Ascending aorta (tissue), 2 donors: ENCODE measurements at regions of chr11 and their contacts with region 1.

Region 1: DNA sequence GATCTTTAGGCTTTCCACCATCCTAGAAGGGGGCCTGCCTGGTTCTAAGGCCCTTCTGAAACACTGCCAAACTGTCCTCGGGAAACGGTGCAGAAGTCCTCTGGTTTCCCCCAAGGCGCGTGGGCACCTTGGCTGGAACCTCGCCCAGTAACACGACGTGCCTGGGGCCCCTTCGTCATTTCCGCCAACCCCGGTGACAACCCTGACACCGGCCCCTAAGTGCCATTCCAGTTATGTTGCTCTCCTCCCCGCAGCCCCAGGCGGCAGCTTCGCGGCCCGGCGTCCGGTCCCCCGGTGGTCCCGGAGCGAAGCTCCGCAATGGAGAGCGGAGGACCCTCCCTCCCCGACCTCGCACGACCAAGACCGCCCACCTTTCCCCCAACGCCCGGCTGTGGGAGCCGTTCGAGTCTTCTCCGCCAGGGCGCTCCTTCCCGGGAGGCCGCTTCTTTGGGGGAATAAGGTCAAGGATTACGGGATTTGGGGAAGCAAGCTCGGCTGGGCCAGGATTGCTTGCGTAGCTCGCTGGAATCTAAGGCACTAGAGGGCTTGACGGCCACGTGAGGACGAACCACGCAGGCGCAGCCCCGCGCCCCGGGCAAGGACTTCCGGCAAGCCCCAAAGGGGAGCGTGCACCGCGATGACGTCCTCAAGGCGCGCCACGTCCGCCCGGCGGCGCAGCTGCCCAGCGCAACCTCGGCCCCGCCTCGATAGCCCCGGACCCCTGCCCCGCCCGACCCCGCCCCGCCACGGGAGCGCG is 626 bp downstream of the RNH1 start:
- DNase-seq: peak; percentile 76 to 98
- H3K4me3 ChIP-seq: peak overlapping the region; percentile 83 to 85
- H3K27ac ChIP-seq: peak overlapping the region; percentile 99 to 100
- H3K4me1 ChIP-seq: peaks cover 15 to 37% of the 10 kb centered on the region in 2 donors
- H3K27me3 ChIP-seq: no peaks in the 10 kb centered on the region
- CTCF ChIP-seq: peak in 2 of 3 experiments; percentile 8 to 23

Region 2: DNA sequence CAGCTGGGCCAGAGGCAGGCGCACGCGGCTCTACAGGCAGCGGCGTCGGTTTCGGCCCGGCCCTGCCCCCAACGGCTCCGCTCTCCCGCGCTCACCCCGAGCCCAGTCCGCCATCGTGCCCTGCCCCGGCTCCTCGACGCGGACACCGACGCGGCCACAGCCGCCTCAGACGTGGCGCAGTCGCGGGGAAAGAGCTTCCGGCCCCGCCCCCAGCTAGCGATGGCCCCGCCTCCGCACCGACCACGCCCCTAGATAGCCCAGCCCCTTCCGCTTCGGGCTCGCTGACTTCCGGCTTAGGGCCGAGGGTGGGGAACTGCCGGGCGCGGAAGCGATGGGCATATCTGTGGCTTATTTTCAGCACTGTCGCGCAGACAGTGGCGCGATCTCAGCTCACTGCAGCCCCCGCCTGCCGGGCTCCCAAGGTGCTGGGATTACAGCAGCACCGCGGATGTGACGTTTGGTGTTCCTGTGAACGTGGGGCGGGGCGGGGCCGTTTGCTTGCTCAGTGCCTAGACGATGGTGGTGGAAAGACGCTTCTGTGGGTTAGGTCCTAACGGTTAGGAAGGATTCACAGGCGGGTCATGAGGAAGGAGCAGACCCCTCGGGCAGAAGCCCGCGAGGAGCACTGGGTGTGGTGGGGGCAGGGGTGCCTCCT is 299.1 kb before region 1 on chr11 and contains the starts of genes BET1L and RIC8A:
- intact Hi-C with region 1: loop called (anchors 1 kb)
- DNase-seq: peak; percentile 95 to 99
- H3K4me3 ChIP-seq: peak within 1 kb of the TSS; percentile 88 to 99
- H3K27ac ChIP-seq: peak within 1 kb of the TSS; percentile 99
- H3K4me1 ChIP-seq: peaks cover 17 to 47% of the 10 kb centered on the region in 2 donors
- H3K27me3 ChIP-seq: no peaks in the 10 kb centered on the region
- CTCF ChIP-seq: no peak
- total RNA-seq, gene BET1L: 42.3 TPM
- total RNA-seq, gene RIC8A: 102 TPM

Region 3: DNA sequence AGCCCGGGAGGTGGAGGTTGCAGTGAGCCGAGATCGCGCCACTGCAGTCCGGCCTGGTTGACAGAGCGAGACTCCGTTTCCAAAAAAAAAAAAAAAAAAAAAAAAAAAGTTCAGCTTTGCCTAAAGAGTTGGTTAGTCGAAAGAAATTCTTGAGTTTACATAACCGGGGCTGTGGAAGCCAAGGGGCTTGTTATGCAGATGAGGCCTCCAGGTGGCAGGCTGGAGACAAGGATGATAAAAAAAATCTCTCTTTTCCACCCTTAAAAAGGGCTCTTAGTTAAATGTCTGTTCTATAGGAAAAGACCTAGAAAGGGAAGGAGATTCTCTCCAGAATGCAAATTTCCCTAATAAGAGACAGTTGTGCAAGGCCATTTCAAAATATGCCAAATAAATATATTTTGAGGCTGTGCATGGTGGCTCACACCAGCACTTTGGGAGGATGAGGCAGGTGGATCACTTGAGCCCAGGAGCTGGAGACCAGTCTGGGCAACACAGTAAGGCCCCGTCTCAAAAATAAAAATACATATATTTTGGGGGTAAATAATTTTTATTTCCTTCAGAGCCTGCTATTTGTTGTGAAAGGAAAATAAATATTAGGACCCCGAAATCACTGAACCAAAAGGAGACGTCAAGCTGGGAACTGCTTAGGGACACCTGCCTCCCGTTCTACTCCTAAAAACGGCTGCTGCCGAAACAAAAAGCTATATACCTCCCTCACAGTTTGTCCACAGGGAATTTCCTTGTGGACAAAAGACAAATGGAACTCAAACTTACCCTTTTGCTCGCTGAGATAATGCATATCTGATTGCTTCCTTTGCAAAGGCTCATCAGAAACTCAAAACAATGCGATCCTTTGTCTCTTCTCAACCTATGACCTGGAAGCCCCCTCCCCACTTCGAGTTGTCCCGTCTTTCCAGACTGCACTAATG is 201.2 kb before region 1 on chr11:
- intact Hi-C with region 1: loop called (anchors 5 kb)
- DNase-seq: peak in 1 of 2 donors; percentile 85
- H3K4me3 ChIP-seq: no peak overlapping the region
- H3K27ac ChIP-seq: peak overlapping the region in 1 of 2 donors; percentile 86
- H3K4me1 ChIP-seq: peaks cover 7 to 35% of the 10 kb centered on the region in 2 donors
- H3K27me3 ChIP-seq: no peaks in the 10 kb centered on the region
- CTCF ChIP-seq: peak; percentile 58 to 65 (median 64)

Region 4: GRCh38 chr11:406978-407739 is 99.3 kb before region 1 on chr11:
- intact Hi-C with region 1: no loop called
- DNase-seq: peak; percentile 33 to 88
- H3K4me3 ChIP-seq: peak overlapping the region; percentile 55 to 56
- H3K27ac ChIP-seq: no peak overlapping the region
- H3K4me1 ChIP-seq: peaks cover 6 to 8% of the 10 kb centered on the region in 2 donors
- H3K27me3 ChIP-seq: no peaks in the 10 kb centered on the region
- CTCF ChIP-seq: no peak

Region 5: DNA sequence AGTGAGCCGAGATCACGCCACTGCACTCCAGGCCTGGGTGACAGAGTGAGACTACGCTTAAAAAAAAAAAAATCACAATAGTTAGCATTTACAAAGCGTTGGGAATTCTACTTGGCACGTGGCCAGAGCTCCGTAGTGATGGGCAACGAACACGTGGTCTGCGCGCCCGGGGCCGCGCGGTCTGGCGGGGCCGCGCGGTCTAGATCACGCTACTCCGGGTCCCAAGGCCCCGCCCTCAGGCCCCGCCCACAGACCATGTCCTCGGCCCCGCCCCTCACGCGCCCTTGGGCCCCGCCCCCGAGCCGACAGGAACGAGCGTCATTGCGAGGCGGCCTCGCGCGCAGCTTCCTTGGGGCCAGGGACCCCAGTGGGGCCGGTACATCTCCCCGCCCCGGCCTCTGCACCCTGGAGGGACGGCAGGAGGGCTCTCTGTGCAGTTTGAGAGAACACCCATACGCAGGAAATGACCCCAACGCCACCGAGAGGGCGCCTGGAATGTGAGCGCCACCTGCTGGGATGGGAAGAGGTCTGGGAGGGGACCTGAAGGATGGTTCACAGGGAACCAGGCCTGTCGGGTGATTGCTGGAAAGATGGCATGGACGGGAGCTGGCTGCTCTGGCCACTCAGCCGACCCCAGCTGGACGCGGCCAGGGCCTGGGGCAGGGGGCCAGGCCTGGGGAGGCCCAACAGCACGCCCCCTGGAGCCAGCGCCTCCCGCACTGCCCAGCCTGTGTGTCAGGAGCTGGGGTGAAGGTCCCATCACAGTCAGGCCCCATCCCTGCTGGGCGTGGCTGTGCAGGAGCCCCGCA is 58.3 kb before region 1 on chr11:
- intact Hi-C with region 1: loop called (anchors 1 kb)
- DNase-seq: peak; percentile 69 to 97
- H3K4me3 ChIP-seq: peak overlapping the region; percentile 64 to 65
- H3K27ac ChIP-seq: peak overlapping the region; percentile 84 to 85
- H3K4me1 ChIP-seq: peaks cover 7 to 20% of the 10 kb centered on the region in 2 donors
- H3K27me3 ChIP-seq: no peaks in the 10 kb centered on the region
- CTCF ChIP-seq: peak; percentile 82 to 90 (median 83)

Region 6: DNA sequence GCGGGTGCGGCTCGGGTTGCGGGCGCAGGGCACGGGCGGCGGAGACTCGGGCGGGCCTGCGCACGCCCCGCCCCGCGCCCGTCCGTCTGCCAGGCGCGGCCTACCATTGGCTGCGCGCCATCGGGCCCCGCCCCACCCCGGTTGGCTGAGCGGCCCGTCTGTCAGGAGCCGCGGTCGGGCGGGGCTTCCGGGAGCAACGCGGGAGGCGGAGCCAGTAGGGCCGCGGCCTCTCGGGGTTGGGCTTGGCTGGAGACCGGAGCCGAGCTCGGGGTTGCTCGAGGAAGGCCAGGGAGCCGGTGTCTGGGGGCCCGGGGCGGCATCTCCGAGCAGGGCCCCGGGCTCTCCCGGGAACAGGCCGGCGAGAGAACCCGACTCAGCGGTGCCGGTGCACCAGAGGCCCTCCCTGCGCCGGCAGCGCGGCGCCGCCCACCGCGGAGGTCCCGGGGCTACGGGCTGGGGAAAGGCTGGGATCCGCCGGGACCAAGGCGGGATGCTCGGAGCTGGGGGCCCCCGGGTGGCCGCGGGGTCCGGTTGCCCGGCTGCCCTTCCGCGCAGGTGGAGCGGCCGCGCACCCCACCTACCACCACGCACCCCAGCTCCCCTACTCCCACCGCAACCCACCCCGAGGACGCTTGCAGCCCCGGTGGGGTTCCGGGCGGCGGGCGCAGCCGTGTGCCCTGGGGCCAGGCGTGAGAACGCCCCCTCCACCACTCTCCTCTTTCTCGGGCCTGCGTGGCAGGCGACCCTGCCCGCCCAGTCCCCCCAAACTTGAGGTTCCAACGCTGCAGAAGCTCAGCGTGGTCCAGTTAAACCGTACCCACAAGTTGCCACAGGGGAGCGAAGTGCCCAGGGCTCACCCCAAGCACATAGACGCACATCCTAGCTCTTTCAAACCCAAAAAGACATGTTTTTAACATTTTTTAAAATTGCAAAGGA is 29.4 kb after region 1 on chr11 and contains the start of gene HRAS:
- intact Hi-C with region 1: loop called (anchors 1 kb)
- DNase-seq: peak; percentile 72 to 96
- H3K4me3 ChIP-seq: peak within 1 kb of the TSS; percentile 92 to 94
- H3K27ac ChIP-seq: peak within 1 kb of the TSS; percentile 63 to 64
- H3K4me1 ChIP-seq: peaks cover 13 to 26% of the 10 kb centered on the region in 2 donors
- H3K27me3 ChIP-seq: no peaks in the 10 kb centered on the region
- CTCF ChIP-seq: no peak
- total RNA-seq, gene HRAS: 21.6 TPM

Region 7: DNA sequence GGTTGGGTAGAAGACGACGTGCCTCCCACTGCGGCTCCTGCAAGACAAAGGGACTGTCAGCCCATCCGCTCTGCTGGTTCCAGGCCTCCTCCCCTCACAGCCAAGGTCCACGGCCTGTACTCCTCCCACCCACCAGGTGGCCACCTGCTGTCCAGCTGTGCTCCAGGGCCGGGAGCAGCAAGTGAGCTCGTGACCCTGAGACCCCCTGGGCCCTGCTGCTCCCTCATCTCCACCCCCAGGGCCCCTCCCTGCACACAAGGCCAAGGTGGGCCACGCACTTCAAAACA is 363.7 kb after region 1 on chr11:
- intact Hi-C with region 1: no loop called
- DNase-seq: no peak
- H3K4me3 ChIP-seq: no peak overlapping the region
- H3K27ac ChIP-seq: no peak overlapping the region
- H3K4me1 ChIP-seq: no peaks in the 10 kb centered on the region
- H3K27me3 ChIP-seq: no peaks in the 10 kb centered on the region
- CTCF ChIP-seq: no peak